Caco-2 (cell line): ENCODE measurements at regions of chr5 and their contacts with region 1.

Region 1: DNA sequence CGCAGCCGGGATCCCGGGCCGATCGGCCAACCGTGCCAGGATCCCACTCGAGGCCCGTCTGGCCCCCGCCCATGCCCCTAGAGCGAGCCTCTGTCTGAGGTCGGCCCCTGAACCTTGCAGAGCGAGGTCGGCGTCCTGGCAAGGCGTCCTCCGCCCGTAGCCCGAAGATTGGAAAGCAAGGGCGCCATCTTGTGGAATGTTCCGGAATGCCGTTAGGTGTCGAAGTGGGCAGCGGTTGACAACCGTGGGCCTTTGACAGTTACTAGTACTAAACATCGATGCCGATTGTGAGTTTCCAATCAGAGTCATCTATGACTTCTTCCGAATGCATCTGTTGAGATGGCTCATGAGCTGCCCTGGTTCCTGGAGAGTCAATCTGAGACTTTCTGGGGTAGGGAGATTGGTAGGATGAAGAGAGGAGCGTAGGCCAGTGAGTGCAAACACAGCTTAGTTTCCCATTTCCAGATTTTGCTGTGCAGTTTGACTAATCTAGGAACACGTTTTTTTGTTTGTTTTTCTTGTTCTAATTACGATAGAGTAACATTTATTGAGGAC is 923 bp upstream of the PLK2 start:
- DNase-seq: peak; percentile 91 to 93
- H3K4me3 ChIP-seq: peak overlapping the region; percentile 99
- H3K4me3 Mint-ChIP-seq: peak overlapping the region; percentile 94
- H3K27ac Mint-ChIP-seq: peak overlapping the region; percentile 94
- H3K4me1 ChIP-seq: peaks cover 17% of the 10 kb centered on the region
- H3K4me1 Mint-ChIP-seq: peaks cover 24% of the 10 kb centered on the region
- H3K27me3 ChIP-seq: no peaks in the 10 kb centered on the region
- H3K27me3 Mint-ChIP-seq: no peaks in the 10 kb centered on the region
- CTCF ChIP-seq: peak; percentile 78 to 88

Region 2: DNA sequence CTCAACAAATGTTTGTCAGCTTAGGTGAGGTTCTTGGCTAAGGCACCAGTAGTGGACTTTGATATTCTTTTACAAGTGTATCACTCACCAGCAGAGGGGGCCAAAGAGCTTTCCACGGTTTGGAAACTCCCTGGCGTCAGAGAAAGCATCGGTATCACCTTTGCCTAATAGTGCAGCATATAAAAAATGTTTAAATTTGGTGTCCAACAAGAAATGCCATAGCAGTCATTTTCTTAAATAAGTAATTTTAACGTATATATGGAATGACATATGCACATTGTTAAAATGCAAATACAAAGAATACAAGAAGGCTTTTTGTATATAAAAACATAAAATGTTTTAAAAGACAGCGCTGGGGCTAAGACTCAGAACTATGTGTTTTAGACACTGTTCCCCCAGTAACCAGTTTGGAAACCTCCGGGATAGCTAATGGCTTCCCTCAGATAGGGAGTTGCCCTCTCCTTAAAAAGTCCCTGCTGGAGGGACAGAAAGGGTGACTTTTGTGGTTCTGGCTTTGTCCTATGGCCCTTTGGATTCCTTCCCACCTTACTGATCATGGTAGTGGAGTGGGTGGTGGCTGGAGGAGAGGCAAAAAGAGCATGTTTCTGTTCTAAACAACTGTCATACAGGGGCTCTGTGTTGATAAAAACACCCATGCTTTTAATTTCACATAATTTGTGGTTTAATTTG is 1162.4 kb before region 1 on chr5:
- CTCF ChIA-PET with region 1: interaction called, 8 read pairs
- POLR2A ChIA-PET with region 1: no interaction called
- intact Hi-C with region 1: loop called (anchors 1 kb)
- DNase-seq: peak; percentile 84 to 89
- H3K4me3 ChIP-seq: no peak overlapping the region
- H3K4me3 Mint-ChIP-seq: peak overlapping the region; percentile 53
- H3K27ac Mint-ChIP-seq: no peak overlapping the region
- H3K4me1 ChIP-seq: peaks cover 10% of the 10 kb centered on the region
- H3K4me1 Mint-ChIP-seq: peaks cover 10% of the 10 kb centered on the region
- H3K27me3 ChIP-seq: no peaks in the 10 kb centered on the region
- H3K27me3 Mint-ChIP-seq: no peaks in the 10 kb centered on the region
- CTCF ChIP-seq: peak; percentile 74 to 79

Region 3: DNA sequence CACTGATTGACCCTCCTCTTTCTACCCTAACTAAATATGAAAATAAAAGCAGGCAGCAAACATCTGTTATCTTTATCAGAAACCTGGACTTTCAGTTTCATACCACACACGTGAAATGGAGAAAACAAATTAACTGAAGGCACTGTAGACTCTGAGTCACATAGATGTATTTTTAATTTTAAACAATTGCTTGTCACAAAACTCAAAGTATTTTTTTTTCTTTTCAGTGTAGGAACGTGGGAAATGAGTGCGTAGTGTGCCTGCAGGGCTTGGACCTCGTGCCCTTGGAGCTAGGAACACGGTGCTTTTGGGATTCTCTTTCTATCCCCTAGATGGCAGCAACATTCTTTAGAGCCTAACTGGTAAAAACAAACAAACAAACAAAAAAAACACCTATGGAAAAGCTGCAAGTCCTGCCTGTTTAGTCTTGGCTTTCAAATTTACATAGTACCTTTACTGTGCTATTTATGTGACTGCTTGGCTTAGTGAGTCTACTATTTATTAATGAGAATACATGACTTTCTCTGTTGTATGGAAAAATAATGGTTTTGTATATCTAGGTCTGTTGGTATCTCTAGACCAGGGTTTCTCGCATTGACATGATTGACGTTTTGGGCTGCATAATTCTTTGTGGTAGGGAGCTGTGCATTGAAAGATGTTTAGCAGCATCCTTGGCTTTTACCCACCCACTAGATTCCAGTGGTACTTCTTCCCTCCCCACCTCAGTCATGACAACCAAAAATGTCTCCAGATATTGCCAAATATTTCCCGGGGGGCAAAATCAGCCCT is 961.4 kb before region 1 on chr5:
- CTCF ChIA-PET with region 1: interaction called, 8 read pairs
- POLR2A ChIA-PET with region 1: no interaction called
- intact Hi-C with region 1: loop called (anchors 1 kb)
- DNase-seq: peak in 1 of 2 experiments; percentile 53
- H3K4me3 ChIP-seq: no peak overlapping the region
- H3K4me3 Mint-ChIP-seq: peak overlapping the region; percentile 46
- H3K27ac Mint-ChIP-seq: no peak overlapping the region
- H3K4me1 ChIP-seq: peaks cover 7% of the 10 kb centered on the region
- H3K4me1 Mint-ChIP-seq: peaks cover 8% of the 10 kb centered on the region
- H3K27me3 ChIP-seq: no peaks in the 10 kb centered on the region
- H3K27me3 Mint-ChIP-seq: no peaks in the 10 kb centered on the region
- CTCF ChIP-seq: peak; percentile 67 to 77

Region 4: GRCh38 chr5:57887851-57888621 is 572.8 kb before region 1 on chr5:
- CTCF ChIA-PET with region 1: interaction called, 33 read pairs
- POLR2A ChIA-PET with region 1: no interaction called
- intact Hi-C with region 1: loop called (anchors 1 kb)
- DNase-seq: peak; percentile 72 to 75
- H3K4me3 ChIP-seq: no peak overlapping the region
- H3K4me3 Mint-ChIP-seq: no peak overlapping the region
- H3K27ac Mint-ChIP-seq: no peak overlapping the region
- H3K4me1 ChIP-seq: no peaks in the 10 kb centered on the region
- H3K4me1 Mint-ChIP-seq: no peaks in the 10 kb centered on the region
- H3K27me3 ChIP-seq: no peaks in the 10 kb centered on the region
- H3K27me3 Mint-ChIP-seq: no peaks in the 10 kb centered on the region
- CTCF ChIP-seq: peak; percentile 55 to 80

Region 5: GRCh38 chr5:58201922-58202648 is 258.7 kb before region 1 on chr5:
- CTCF ChIA-PET with region 1: no interaction called
- POLR2A ChIA-PET with region 1: no interaction called
- intact Hi-C with region 1: loop called (anchors 5 kb)
- DNase-seq: no peak
- H3K4me3 ChIP-seq: no peak overlapping the region
- H3K4me3 Mint-ChIP-seq: no peak overlapping the region
- H3K27ac Mint-ChIP-seq: no peak overlapping the region
- H3K4me1 ChIP-seq: no peaks in the 10 kb centered on the region
- H3K4me1 Mint-ChIP-seq: no peaks in the 10 kb centered on the region
- H3K27me3 ChIP-seq: no peaks in the 10 kb centered on the region
- H3K27me3 Mint-ChIP-seq: no peaks in the 10 kb centered on the region
- CTCF ChIP-seq: no peak

Region 6: DNA sequence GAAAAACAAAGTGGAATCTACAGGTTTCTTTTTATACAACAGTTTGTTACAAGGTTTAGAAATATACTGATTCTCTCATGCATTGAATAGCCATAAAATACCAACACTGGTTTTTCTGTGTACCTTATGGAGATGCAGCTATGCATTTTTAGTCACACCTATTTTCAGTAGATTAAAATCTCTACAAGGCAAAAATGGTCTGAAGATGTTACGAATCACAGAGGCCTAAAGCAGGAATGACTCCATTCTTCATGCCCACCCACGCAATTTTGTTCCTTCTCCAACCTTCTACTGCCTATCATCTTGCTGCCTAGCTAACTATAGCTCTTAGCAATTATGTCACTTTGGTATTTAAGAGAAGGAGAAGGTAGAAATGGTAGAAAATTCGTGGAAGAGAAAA is 10.8 kb before region 1 on chr5:
- CTCF ChIA-PET with region 1: no interaction called
- POLR2A ChIA-PET with region 1: no interaction called
- intact Hi-C with region 1: no loop called
- DNase-seq: no peak
- H3K4me3 ChIP-seq: no peak overlapping the region
- H3K4me3 Mint-ChIP-seq: no peak overlapping the region
- H3K27ac Mint-ChIP-seq: no peak overlapping the region
- H3K4me1 ChIP-seq: no peaks in the 10 kb centered on the region
- H3K4me1 Mint-ChIP-seq: no peaks in the 10 kb centered on the region
- H3K27me3 ChIP-seq: no peaks in the 10 kb centered on the region
- H3K27me3 Mint-ChIP-seq: no peaks in the 10 kb centered on the region
- CTCF ChIP-seq: no peak